BJ (cell line): ENCODE measurements at regions of chr4 and their contacts with region 1.

Region 1: DNA sequence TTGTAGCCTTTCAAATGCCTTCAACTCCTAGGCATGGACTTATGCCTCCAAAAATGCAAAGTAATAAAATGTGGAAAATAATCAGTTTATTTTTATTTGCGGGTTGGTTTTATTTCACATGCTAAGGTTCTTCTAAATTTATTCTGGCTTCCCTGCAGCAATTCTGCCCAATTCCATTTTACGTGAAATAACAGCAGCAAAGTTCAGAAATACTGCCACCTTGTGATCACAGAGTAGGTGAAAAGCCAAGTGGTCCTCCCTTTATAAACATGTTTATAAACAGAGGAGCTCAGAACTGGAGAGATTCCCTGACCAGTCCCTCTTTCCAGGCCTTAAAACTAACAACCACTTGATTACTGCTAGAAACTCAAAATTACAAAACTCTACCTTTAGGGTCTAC is 14.7 kb upstream of the DCHS2 start:
- DNase-seq: no peak
- H3K4me3 ChIP-seq: no peak overlapping the region
- H3K27me3 ChIP-seq: no peaks in the 10 kb centered on the region
- CTCF ChIP-seq: peak; percentile 52

Region 2: GRCh38 chr4:154399259-154399974 is 106.8 kb before region 1 on chr4:
- CTCF ChIA-PET with region 1: interaction called, 12 read pairs
- POLR2A ChIA-PET with region 1: no interaction called
- DNase-seq: no peak
- H3K4me3 ChIP-seq: no peak overlapping the region
- H3K27me3 ChIP-seq: no peaks in the 10 kb centered on the region
- CTCF ChIP-seq: peak; percentile 50

Region 3: DNA sequence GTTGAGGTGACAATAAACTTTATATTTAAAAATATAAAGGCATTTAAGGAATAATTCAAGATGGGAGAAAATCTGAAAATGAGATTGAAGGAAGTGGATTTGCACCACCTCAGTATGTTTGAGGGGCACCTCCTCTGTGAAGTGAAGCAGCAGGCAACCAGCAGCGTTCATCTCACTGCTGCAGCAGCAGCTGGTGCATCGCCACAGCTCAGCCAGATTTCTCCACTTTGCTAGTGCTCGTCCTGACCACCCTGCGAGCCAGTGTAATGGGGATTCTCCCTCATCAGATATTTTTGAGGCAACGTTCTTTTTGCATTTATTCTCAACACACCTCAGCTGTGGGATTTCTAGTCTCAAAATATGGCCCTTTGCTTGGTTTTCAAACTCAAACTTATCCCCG is 251.5 kb after region 1 on chr4:
- CTCF ChIA-PET with region 1: no interaction called
- POLR2A ChIA-PET with region 1: no interaction called
- DNase-seq: no peak
- H3K4me3 ChIP-seq: no peak overlapping the region
- H3K27me3 ChIP-seq: no peaks in the 10 kb centered on the region
- CTCF ChIP-seq: no peak